ENCODE measurements at regions of chr11 and their contacts with region 1.

Region 1: GRCh38 chr11:82927254-82927880 is 25.8 kb downstream of the DDIAS start:
- DNase-seq: no peak
- H3K4me3 ChIP-seq: no peak overlapping the region
- H3K27ac ChIP-seq: no peak overlapping the region
- H3K4me1 ChIP-seq: no peaks in the 10 kb centered on the region
- H3K27me3 ChIP-seq: no peaks in the 10 kb centered on the region
- CTCF ChIP-seq: peak; percentile 69 to 75

Region 2: GRCh38 chr11:82906244-82906654 is 21.1 kb before region 1 on chr11:
- intact Hi-C with region 1: no loop called
- DNase-seq: no peak
- H3K4me3 ChIP-seq: no peak overlapping the region
- H3K27ac ChIP-seq: no peak overlapping the region
- H3K4me1 ChIP-seq: peaks cover 0 to 8% (median 5%) of the 10 kb centered on the region in 4 donors
- H3K27me3 ChIP-seq: no peaks in the 10 kb centered on the region
- CTCF ChIP-seq: peak; percentile 55 to 60

Region 3: GRCh38 chr11:83724008-83724461 is 796.7 kb after region 1 on chr11:
- intact Hi-C with region 1: loop called (anchors 10 kb)
- DNase-seq: peak in 1 of 2 donors; percentile 36
- H3K4me3 ChIP-seq: peak overlapping the region; percentile 39 to 47
- H3K27ac ChIP-seq: no peak overlapping the region
- H3K4me1 ChIP-seq: peaks cover 0 to 19% (median 12%) of the 10 kb centered on the region in 4 donors
- H3K27me3 ChIP-seq: no peaks in the 10 kb centered on the region
- CTCF ChIP-seq: peak; percentile 24 to 44